Esophagus muscularis mucosa (tissue), 4 donors: ENCODE measurements at regions of chr6 and their contacts with region 1.

Region 1: DNA sequence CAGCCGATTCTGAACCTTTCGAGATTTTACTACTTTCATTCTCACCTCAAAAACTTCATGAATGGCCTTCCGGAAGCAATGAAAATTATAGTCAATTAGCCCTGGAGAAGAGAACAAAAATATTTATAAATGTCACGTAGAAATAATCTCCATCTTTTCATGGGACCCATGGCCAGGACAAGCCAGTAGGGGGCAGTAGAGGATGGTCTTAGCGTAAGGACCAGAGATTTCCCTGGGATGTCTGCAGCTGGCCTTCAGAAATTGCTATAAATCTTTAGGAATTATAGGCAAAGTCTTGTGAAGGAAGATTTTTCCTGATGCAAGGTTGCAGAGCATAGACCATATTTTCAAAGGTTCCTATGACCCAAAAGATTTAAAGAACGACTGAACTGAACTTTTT is 15.6 kb upstream of the UBE2J1 start:
- DNase-seq: no peak
- H3K4me3 ChIP-seq: no peak overlapping the region
- H3K27ac ChIP-seq: peak overlapping the region in 1 of 4 donors; percentile 14
- H3K4me1 ChIP-seq: peaks cover 18 to 26% (median 23%) of the 10 kb centered on the region in 4 donors
- H3K27me3 ChIP-seq: no peaks in the 10 kb centered on the region
- CTCF ChIP-seq: peak; percentile 58 to 84 (median 59)
- EP300 ChIP-seq: no peak
- POLR2A ChIP-seq: no peak

Region 2: GRCh38 chr6:89352278-89353117 is 15.6 kb before region 1 on chr6 and contains the start of gene UBE2J1:
- intact Hi-C with region 1: loop called (anchors 2 kb)
- DNase-seq: peak; percentile 96
- H3K4me3 ChIP-seq: peak within 1 kb of the TSS; percentile 75 to 92 (median 84)
- H3K27ac ChIP-seq: peak within 1 kb of the TSS; percentile 96 to 98 (median 98)
- H3K4me1 ChIP-seq: peaks cover 29 to 52% (median 46%) of the 10 kb centered on the region in 4 donors
- H3K27me3 ChIP-seq: no peaks in the 10 kb centered on the region
- CTCF ChIP-seq: peak in 1 of 3 experiments; percentile 2
- EP300 ChIP-seq: no peak
- POLR2A ChIP-seq: peak; percentile 86
- total RNA-seq, gene UBE2J1: 31.0 to 36.6 (median 33.6) TPM

Region 3: DNA sequence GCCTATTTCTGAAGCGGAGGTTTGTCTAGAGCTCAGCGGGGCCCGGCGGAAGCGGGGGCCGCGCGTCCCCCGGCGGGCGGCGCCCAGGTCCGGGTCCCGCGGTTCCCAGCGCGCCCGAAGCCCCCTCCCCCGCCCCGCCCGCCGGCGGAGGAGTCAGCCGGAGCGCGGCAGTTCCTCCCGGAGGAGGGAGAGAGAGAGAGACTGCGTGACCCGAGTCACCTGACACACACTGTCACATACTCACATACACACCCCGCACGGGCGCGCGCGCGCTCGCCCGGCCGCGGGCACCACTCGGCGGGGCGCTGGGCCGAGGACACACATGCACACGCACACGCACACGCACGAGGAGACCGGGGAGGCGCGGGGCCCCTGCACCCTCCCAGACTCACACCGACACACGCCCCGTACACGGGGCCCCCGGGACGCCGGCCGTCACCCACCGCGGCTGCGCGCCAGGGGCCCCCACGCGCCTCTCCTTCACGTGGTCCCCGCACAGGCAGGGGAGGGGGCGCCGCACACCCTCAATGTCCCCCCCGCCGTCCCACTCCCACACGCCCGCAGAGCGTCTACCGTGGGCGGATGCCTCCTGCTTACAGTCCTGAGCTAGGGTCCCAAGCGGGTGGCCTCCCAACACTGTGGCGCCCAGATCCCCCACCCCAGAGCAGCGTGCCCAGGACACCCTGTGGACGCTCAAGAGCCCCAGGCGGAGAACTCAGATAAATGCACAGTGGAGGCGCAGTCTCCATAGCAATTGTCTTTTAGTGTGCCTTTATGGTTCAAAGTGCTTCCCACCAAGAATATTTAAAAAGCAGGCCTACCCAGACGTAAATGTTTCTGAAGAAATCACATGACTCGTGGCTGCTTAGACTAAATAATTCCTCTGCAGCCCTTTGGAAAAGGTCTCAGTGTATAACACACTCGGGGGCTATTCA is 44.2 kb after region 1 on chr6 and contains the start of gene RRAGD:
- intact Hi-C with region 1: loop called (anchors 5 kb)
- DNase-seq: no peak
- H3K4me3 ChIP-seq: peak within 1 kb of the TSS; percentile 84 to 97 (median 91)
- H3K27ac ChIP-seq: peak within 1 kb of the TSS; percentile 76 to 86 (median 80)
- H3K4me1 ChIP-seq: peaks cover 18 to 34% (median 23%) of the 10 kb centered on the region in 4 donors
- H3K27me3 ChIP-seq: no peaks in the 10 kb centered on the region
- CTCF ChIP-seq: no peak
- EP300 ChIP-seq: no peak
- POLR2A ChIP-seq: no peak
- total RNA-seq, gene RRAGD: 18.7 to 31.4 (median 19.9) TPM